ENCODE measurements at regions of chr9 and their contacts with region 1.

Region 1: GRCh38 chr9:103761466-103761865 is 332.6 kb upstream of the SMC2 start:
- DNase-seq: no peak
- ATAC-seq: no peak
- H3K4me3 ChIP-seq: no peak overlapping the region
- H3K27ac ChIP-seq: no peak overlapping the region
- H3K4me1 ChIP-seq: no peaks in the 10 kb centered on the region
- H3K27me3 ChIP-seq: no peaks in the 10 kb centered on the region
- CTCF ChIP-seq: no peak
- POLR2A ChIP-seq: no peak

Region 2: GRCh38 chr9:103530934-103531333 is 230.5 kb before region 1 on chr9:
- intact Hi-C with region 1: no loop called
- DNase-seq: no peak
- ATAC-seq: no peak
- H3K4me3 ChIP-seq: no peak overlapping the region
- H3K27ac ChIP-seq: no peak overlapping the region
- H3K4me1 ChIP-seq: no peaks in the 10 kb centered on the region
- H3K27me3 ChIP-seq: no peaks in the 10 kb centered on the region
- CTCF ChIP-seq: no peak
- POLR2A ChIP-seq: no peak

Region 3: DNA sequence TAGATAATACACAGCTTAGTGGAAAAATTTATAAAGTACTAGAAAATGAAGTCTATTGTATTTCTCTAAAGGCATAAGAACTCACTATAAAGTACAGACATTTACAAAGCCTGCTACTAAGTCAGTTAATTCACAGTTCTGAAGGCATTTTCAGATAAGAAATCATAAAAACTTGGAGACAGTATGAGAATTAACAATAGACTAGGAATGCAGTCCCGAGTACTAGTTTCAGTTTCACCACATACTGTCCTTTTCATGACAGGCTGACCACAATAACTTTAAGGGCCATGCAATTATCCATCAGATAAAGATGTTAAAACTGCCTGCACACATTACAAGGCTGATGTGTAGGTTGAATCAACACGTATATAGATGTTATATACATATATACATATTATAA is 29.9 kb before region 1 on chr9:
- intact Hi-C with region 1: no loop called
- DNase-seq: no peak
- ATAC-seq: no peak
- H3K4me3 ChIP-seq: no peak overlapping the region
- H3K27ac ChIP-seq: no peak overlapping the region
- H3K4me1 ChIP-seq: no peaks in the 10 kb centered on the region
- H3K27me3 ChIP-seq: no peaks in the 10 kb centered on the region
- CTCF ChIP-seq: no peak
- POLR2A ChIP-seq: no peak

Region 4: GRCh38 chr9:103819936-103820335 is 58.5 kb after region 1 on chr9:
- intact Hi-C with region 1: loop called in 1 of 10 experiments (anchors 10 kb)
- DNase-seq: no peak
- ATAC-seq: no peak
- H3K4me3 ChIP-seq: no peak overlapping the region
- H3K27ac ChIP-seq: no peak overlapping the region
- H3K4me1 ChIP-seq: peaks cover 0 to 6% (median 0%) of the 10 kb centered on the region in 12 donors
- H3K27me3 ChIP-seq: no peaks in the 10 kb centered on the region
- CTCF ChIP-seq: no peak
- POLR2A ChIP-seq: no peak

Measured in heart left ventricle (tissue), 16 donors.